Caco-2 (cell line): ENCODE measurements at regions of chr11 and their contacts with region 1.

Region 1: DNA sequence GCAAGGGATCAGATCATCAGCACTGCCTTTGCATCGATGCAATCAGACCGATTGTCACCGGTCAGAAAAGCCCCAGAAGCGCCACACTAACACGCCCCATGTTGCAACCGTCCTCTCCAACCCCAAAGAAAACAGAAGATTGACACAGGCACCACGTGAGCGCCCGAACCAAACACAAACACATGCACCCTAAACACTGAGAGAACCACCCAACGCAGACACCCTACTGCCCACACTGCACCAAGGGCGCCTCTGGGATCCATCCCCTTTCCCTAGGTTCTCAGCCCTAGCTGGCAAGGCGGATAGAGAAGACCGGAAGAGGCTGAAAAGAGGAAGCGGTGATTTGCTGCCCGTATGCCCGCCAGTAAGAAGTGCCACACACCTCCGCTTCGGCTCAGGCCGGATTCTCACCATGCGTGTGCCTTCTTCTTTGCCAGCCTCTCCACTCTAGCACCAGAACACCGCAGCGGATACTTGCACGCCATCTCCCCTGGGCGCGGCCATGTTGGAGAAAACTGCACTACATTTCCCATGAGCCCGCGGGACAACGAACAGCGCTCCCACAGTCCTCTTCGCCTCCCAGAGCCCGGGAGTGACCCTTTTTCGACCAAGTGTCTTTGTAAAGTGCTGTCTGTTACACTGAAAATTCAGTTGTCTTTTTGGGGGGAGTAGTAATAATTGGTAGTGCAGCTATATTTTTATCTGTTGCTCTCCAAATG is at the start of gene ALKBH8:
- DNase-seq: peak; percentile 83
- H3K4me3 ChIP-seq: peak within 1 kb of the TSS; percentile 63
- H3K4me3 Mint-ChIP-seq: peak within 1 kb of the TSS; percentile 96
- H3K27ac Mint-ChIP-seq: peak within 1 kb of the TSS; percentile 94
- H3K4me1 ChIP-seq: peaks cover 17% of the 10 kb centered on the region
- H3K4me1 Mint-ChIP-seq: peaks cover 13% of the 10 kb centered on the region
- H3K27me3 ChIP-seq: no peaks in the 10 kb centered on the region
- H3K27me3 Mint-ChIP-seq: no peaks in the 10 kb centered on the region
- CTCF ChIP-seq: no peak
- total RNA-seq, gene ALKBH8: 15.7 and 16.8 TPM in 2 replicates

Region 2: DNA sequence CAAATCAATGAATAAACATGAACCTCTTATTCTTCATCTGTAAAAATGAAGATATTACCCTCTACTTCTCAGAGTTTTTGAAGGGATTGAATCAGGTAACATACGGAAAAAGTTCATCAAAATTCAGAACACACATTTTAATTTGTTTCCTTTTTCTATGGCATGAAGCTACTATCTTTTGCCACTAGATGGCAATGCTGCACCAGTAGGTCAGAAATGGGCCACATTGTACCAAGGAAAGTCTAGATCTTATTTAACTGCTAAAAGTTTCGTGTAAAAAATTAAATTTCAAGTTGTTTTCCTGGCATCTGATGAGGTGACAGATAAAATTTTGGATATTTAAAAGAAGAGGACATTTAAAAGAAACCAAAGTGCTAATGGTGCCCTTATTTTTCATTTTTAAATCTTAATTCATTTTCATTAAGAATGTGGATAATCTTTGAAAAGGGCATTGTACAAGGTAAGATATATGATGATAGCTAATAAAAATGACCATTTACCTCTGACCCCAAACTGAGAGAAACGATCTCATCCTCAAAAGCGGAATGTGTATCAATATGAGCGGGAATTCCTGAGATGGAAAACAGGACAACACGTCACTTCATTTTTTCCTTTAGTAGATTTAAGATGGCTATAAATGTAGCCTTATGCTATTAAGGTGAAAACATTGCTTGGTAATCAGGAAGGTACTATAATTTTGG is 16.0 kb before region 1 on chr11:
- CTCF ChIA-PET with region 1: interaction called, 4 read pairs
- POLR2A ChIA-PET with region 1: no interaction called
- intact Hi-C with region 1: loop called (anchors 1 kb)
- DNase-seq: peak in 1 of 2 experiments; percentile 50
- H3K4me3 ChIP-seq: no peak overlapping the region
- H3K4me3 Mint-ChIP-seq: no peak overlapping the region
- H3K27ac Mint-ChIP-seq: no peak overlapping the region
- H3K4me1 ChIP-seq: 0 out of 2 replicates have a peak, but pooled peaks cover 8% of the 10 kb centered on the region
- H3K4me1 Mint-ChIP-seq: peaks cover 7% of the 10 kb centered on the region
- H3K27me3 ChIP-seq: no peaks in the 10 kb centered on the region
- H3K27me3 Mint-ChIP-seq: no peaks in the 10 kb centered on the region
- CTCF ChIP-seq: peak; percentile 88 to 94

Region 3: GRCh38 chr11:107606141-107606540 is 40.8 kb after region 1 on chr11:
- CTCF ChIA-PET with region 1: no interaction called
- POLR2A ChIA-PET with region 1: no interaction called
- intact Hi-C with region 1: loop called (anchors 5 kb)
- DNase-seq: no peak
- H3K4me3 ChIP-seq: no peak overlapping the region
- H3K4me3 Mint-ChIP-seq: no peak overlapping the region
- H3K27ac Mint-ChIP-seq: no peak overlapping the region
- H3K4me1 ChIP-seq: no peaks in the 10 kb centered on the region
- H3K4me1 Mint-ChIP-seq: no peaks in the 10 kb centered on the region
- H3K27me3 ChIP-seq: no peaks in the 10 kb centered on the region
- H3K27me3 Mint-ChIP-seq: peaks cover 21% of the 10 kb centered on the region
- CTCF ChIP-seq: peak in 1 of 2 experiments; percentile 21

Region 4: DNA sequence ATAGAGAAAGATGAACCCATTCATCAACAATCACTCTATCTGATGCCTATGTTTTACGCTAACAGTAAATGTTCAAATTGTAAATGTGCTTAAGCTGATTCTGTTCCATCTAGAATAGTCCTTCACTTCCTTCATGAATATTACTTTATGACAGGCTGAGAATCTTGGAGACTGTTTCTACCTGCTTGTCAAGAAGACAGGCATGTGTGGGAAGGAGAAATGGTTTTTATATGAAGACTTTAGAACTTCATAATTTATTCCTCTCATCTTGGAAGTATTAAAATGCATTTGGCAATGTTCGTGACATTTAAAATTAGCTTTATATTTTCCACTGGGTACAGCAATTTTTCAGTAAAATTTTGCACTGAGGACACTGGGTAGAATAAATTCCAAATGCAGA is 66.6 kb after region 1 on chr11:
- CTCF ChIA-PET with region 1: no interaction called
- POLR2A ChIA-PET with region 1: no interaction called
- intact Hi-C with region 1: no loop called
- DNase-seq: no peak
- H3K4me3 ChIP-seq: no peak overlapping the region
- H3K4me3 Mint-ChIP-seq: no peak overlapping the region
- H3K27ac Mint-ChIP-seq: no peak overlapping the region
- H3K4me1 ChIP-seq: no peaks in the 10 kb centered on the region
- H3K4me1 Mint-ChIP-seq: no peaks in the 10 kb centered on the region
- H3K27me3 ChIP-seq: peaks cover 2% of the 10 kb centered on the region
- H3K27me3 Mint-ChIP-seq: peaks cover 35% of the 10 kb centered on the region
- CTCF ChIP-seq: no peak